HEK293T (cell line): ENCODE measurements at regions of chr1 and their contacts with region 1.

Region 1: GRCh38 chr1:230978491-230979388 is at the starts of genes ARV1 and TTC13:
- DNase-seq: peak; percentile 100

Region 2: DNA sequence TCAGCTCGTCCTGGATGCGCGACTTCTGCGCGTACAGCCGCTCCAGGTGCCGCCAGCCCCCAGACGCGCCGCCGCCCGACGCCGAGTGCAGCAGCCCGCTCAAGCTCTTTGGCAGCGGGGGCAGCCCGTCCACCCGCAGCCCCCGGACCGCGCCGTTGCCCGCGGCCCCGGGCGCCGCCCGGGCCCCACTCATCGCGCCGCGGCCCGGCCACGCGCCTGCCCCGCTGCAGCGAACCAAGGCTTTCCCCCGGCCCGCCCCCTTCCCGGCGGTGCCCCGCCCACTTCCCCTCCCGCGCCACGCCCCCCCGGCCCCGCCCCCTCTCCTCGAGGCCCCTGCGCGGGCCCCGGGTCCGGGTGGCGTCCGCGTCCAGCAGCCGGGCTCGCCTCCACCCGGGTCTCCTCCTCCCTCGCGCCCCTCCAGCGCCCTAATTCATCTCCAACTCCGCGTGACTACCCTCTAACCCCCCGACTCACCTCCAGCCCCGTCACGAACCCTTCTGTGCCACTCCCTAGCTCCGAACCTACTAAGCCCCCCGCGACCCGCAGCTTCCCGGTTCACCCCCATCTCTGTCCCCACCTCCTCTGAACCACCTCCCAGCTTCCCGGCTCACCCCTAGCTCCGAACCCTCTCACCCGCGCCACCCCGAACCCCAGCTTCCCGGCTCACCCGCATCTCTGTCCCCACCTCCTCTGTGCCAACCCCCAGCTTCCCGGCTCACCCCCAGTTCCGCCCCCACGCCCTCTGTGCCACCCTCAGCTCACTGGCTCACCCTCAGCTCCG is 61.5 kb after region 1 on chr1 and contains the start of gene FAM89A:
- CTCF ChIA-PET with region 1: no interaction called
- POLR2A ChIA-PET with region 1: interaction called, 11 read pairs
- DNase-seq: peak; percentile 96

Region 3: DNA sequence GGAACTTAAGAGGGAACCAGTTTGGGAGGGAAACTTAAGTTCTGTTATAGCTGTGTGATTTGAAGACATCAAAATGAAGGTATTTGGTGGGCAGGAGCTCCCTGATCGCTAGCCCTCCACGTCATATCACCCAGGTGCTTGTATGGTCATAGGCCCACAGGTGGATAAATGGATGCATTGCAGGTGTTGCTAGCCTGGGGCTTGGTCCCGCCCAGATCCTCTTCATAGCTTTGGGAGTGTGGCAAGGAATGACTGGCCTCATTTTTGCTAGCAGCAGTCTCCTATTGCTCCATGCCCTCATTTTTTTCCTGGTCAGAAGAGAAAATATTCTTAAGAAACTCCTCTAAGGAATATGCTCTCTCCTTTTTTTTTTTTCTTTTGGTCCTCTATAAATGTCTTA is 273.6 kb after region 1 on chr1:
- CTCF ChIA-PET with region 1: no interaction called
- POLR2A ChIA-PET with region 1: no interaction called
- DNase-seq: no peak